Prostate gland (tissue), 2 donors: ENCODE measurements at regions of chr1 and their contacts with region 1.

Region 1: DNA sequence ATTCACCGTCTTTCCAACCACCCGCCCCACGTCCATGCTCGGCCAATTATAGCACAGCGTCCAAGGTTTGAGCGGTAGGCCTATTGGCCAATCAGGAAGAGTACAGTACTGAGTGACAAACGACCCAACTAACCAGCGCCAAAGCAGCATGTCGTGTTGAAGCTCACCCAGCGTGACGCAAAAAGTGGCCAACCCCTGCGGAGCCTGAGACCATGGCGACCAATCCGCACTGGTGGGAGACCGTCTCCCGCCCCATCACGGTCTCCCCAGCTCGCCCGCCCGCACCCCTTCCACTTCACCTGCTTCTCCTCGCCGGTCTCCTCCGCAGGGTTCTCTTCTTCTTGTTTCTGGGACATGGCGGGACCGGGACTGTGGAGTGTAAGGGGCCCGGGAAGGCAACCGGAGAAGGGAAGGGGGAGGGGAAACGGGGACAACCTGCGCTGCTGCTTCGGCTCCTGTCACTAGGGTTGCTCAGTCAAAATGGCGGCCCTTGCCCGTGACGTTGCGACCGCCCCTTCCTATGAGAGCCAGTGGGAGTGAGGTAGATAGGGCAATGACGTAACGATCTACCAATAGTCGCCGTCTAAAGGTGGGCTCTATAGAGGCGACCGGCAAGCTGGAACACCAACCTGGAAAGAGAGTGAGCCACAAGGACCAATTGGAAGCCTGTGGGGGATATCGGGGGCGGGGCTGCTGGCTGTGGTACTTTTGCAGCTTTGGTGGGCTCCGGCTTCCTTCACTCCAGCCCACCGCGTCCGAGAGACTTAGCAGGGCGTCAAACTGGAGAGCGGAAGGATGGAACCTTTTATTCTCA is at the start of gene ENSA:
- DNase-seq: peak; percentile 99
- H3K4me3 ChIP-seq: peak within 1 kb of the TSS; percentile 60 to 72
- H3K27ac ChIP-seq: peak within 1 kb of the TSS; percentile 99
- H3K4me1 ChIP-seq: peaks cover 6% of the 10 kb centered on the region
- H3K27me3 ChIP-seq: no peaks in the 10 kb centered on the region
- CTCF ChIP-seq: peak in 1 of 4 experiments; percentile 6
- POLR2A ChIP-seq: peak; percentile 93
- total RNA-seq, gene ENSA: 133 to 201 TPM

Region 2: DNA sequence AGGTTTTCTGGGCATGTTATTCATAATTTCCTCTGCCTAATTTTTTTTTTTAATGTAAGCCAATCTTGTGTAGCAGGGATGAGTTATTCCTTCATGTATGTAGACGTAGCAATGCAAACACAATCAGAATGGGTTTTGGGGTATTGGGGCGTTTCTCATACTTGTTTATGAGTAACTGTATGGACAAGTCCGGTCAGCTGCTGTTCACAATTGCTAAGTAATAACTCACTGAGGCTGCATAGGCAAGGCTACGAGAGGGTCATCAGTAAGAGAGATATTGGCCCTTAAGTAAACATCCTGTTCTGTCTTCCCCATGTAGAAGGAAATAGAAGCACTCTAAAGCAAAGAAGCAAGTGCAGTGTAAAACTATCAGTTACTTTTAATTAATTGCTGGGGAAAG is 151.6 kb before region 1 on chr1:
- intact Hi-C with region 1: loop called (anchors 10 kb)
- DNase-seq: no peak
- H3K4me3 ChIP-seq: no peak overlapping the region
- H3K27ac ChIP-seq: no peak overlapping the region
- H3K4me1 ChIP-seq: no peaks in the 10 kb centered on the region
- H3K27me3 ChIP-seq: no peaks in the 10 kb centered on the region
- CTCF ChIP-seq: no peak
- POLR2A ChIP-seq: no peak

Region 3: DNA sequence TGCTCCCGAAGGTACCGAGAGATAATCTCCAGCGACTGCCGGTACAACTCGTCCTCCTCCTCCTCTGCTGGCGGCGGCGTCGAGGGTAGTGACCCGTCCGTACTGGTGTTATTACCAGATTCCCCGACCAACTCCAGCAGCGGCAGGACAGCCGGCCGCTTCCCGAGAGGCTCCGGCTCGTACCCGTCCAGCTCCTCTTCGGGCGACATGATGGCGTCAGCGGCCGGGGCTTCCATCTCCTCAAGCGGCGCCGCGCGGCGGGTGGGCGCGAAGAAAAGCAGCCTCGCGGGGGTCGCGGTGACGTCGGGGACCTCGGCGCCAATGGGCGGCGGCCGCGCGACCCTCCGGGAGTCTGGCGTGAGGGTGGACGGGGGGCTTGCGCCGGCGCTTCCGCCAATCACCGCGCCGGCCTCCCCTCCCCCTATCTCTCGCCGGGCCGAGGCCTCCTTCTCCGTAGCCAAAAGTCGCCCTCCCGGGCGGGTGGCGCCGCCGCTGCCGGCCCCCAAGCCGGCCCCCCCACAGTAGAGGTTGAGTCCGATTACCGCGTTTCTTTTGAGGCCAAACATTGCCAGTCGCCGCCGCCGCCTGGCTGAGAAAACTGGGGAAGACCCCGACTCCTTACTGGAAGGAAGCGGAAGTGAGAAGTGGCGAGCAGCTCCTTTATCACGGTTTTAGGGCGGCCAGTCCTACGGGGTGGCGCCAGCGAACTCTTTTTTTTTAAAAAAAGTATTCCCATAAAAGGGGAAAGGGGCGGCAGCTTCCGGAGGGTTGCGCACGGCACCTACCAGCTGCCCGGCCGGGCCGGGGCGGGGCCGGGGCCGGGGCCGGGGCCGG is 50.1 kb before region 1 on chr1 and contains the start of gene MCL1:
- intact Hi-C with region 1: loop called (anchors 5 kb)
- DNase-seq: peak; percentile 93
- H3K4me3 ChIP-seq: peak within 1 kb of the TSS; percentile 88 to 93
- H3K27ac ChIP-seq: peak within 1 kb of the TSS; percentile 98 to 100
- H3K4me1 ChIP-seq: no peaks in the 10 kb centered on the region
- H3K27me3 ChIP-seq: no peaks in the 10 kb centered on the region
- CTCF ChIP-seq: peak in 2 of 4 experiments; percentile 45 to 64
- POLR2A ChIP-seq: peak; percentile 86
- total RNA-seq, gene MCL1: 161 to 168 TPM